BJ (cell line): ENCODE measurements at regions of chr10 and their contacts with region 1.

Region 1: GRCh38 chr10:97759158-97759887 is 12.5 kb downstream of the SFRP5 start:
- DNase-seq: no peak
- H3K4me3 ChIP-seq: no peak overlapping the region
- H3K27me3 ChIP-seq: no peaks in the 10 kb centered on the region
- CTCF ChIP-seq: peak; percentile 97

Region 2: DNA sequence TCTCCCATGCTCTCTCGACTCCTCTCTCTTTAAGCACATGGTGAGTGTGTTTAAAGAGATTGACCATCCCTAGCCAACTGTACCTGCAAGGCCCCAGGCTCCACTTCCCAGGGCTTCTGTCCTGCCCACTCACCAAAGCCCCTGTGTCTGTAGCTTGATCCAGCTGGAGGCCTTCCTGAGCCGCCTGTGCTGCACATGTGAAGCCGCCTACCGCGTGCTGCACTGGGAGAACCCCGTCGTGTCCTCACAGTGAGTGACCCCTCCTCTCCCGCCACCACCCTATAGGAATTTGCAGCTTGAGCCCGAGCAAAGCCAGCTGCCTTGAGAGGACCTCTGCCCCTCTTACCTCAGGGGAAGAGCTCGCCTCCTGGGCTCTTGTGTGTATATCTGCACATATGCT is 11.2 kb before region 1 on chr10:
- CTCF ChIA-PET with region 1: interaction called, 10 read pairs
- POLR2A ChIA-PET with region 1: no interaction called
- DNase-seq: no peak
- H3K4me3 ChIP-seq: no peak overlapping the region
- H3K27me3 ChIP-seq: no peaks in the 10 kb centered on the region
- CTCF ChIP-seq: no peak